ENCODE measurements at regions of chr13 and their contacts with region 1.

Region 1: DNA sequence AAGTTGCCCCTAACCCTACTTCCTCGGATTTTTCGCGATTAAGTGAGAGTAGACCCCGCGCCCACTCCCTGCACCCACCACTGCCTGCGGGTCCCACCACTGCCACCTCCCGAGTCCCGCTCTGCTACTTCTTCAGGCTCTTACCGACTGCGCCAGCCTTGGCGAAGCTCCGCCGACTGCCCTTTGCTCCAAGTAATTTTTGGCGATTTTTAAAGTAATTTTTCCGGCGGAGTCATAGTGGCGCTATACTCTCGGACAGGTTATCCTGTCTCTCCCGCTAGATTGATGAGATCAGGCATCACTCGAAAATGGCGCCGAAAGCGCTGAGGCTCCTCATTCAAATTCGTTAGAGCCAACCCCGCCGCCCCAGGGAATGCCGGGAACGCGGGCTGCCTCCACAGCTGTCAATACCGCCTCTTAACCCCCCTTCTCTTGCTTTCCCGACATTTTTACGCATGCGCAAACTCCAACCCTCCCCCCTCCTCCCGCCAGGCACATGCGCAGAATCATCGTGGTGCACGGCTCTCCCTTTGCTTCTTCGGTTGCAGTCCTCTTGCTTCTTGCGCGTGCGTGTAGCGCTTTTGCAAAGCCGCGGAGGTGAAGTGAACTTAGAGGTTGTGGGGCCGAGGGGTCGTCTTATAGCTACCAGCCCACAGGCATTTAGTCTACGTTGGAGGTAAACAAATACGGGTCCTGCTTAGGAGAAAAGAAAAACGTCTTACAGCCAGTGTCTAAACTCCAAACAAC is 66.6 kb downstream of the KCNRG start:
- DNase-seq: peak; percentile 100
- H3K4me3 ChIP-seq: peak overlapping the region; percentile 69 to 87 (median 80)
- H3K27ac ChIP-seq: peak overlapping the region; percentile 86 to 99 (median 92)
- H3K4me1 ChIP-seq: peaks cover 7 to 51% (median 45%) of the 10 kb centered on the region in 4 donors
- H3K27me3 ChIP-seq: no peaks in the 10 kb centered on the region
- CTCF ChIP-seq: peak in 2 of 3 experiments; percentile 8 to 16
- EP300 ChIP-seq: no peak
- POLR2A ChIP-seq: no peak

Region 2: DNA sequence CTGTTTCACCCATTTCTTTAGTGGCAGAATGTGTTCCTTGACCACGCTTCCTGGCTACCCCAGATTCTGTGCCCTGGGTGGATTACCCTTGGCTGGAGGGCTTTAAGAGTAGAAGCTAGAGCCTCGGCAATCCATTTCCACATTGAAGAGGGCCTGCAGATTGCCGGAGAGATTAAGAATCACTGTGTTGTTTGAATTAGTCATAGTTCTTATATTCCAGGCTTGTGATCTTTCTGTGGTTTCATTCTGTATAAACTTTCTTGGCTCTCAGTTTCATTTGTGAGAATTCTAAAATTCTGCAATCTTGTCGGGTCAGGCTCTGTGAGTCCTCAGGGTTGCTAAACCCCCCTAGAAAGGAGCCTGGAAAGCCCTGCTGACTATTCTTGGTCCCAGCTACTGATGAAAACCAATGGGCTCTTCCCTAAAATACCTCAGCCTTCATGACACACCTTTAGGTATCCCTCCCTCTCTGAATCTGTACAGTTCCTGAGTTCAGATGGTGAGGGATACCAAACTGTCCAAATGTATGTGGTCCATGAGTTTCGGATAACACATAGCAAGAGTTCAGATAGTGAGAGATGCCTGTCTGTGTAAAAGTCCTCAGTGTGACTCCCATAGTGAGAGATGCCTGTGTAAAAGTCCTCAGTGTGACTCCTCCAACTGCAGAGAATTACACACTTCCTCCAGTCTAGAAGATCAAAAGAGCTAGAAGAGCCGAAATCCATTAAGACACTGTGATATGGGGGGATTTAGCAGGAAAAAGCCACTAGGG is 581.8 kb before region 1 on chr13:
- intact Hi-C with region 1: no loop called
- DNase-seq: no peak
- H3K4me3 ChIP-seq: no peak overlapping the region
- H3K27ac ChIP-seq: peak overlapping the region in 1 of 4 donors; percentile 8
- H3K4me1 ChIP-seq: peaks cover 0 to 25% (median 16%) of the 10 kb centered on the region in 4 donors
- H3K27me3 ChIP-seq: no peaks in the 10 kb centered on the region
- CTCF ChIP-seq: no peak
- EP300 ChIP-seq: no peak
- POLR2A ChIP-seq: no peak

Region 3: DNA sequence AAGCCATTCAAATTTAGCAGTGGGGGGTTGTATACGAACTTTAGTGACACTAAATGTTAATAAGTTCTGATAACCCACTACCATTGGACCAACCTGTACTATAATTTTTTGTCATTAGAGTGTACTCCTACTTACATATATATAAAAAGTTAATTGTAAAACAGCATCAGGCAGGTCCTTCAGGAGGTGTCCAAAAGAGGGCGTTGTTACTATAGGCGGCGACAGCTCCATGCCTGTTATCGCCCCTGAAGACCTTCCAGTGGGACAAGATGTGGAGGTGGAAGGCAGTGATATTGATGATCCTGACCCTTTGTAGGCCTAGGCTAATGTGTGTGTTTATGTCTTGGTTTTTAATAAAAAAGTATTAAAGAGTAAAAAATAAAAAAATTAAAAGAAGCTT is 173.2 kb before region 1 on chr13:
- intact Hi-C with region 1: no loop called
- DNase-seq: no peak
- H3K4me3 ChIP-seq: no peak overlapping the region
- H3K27ac ChIP-seq: no peak overlapping the region
- H3K4me1 ChIP-seq: no peaks in the 10 kb centered on the region
- H3K27me3 ChIP-seq: no peaks in the 10 kb centered on the region
- CTCF ChIP-seq: no peak
- EP300 ChIP-seq: no peak
- POLR2A ChIP-seq: no peak

Region 4: DNA sequence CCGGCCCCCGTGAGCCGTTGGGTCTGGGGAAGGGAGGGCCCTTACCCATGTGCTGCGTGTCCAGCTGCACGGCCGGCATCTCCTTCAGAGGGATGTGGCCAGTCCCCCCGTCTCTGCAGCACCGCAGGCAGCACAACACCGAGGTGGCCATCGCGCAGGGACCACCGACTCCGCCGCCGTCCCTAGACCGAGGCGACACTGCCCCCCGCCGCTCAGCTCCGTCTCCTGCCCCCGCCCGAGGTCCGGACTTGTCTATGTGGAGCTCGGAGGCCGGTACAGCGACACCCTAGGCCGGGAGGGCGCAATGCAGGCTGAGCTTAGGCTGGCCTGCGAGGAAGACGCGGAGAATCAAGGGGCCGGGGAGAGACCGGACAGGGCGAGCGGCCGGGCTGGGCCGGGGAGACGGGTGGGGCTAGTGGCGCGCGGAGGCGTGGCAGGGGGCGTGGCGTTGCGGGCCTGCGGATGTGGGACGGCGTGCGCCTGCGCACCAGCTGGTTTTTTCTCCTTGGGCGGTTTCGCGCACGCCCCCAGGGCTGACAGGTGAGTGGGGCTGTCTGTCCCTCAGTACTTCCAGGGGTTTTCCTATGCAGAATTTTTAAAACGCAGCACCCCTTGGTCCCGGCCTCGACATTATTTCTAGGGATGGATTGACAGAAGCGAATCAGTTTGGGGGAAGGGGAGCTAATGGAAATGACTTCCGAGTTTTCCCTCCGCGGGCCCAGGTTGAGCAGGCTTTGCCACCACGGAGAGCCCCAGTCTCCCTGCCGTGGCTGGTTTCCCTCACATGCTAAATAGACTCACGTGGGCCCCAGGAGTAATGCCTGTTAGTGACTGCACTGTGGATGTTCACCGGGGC is 145.5 kb before region 1 on chr13 and contains the start of gene SPRYD7:
- intact Hi-C with region 1: loop called (anchors 5 kb)
- DNase-seq: peak; percentile 99
- H3K4me3 ChIP-seq: peak within 1 kb of the TSS; percentile 90 to 97 (median 94)
- H3K27ac ChIP-seq: peak within 1 kb of the TSS; percentile 90 to 94 (median 92)
- H3K4me1 ChIP-seq: peaks cover 21 to 76% (median 71%) of the 10 kb centered on the region in 4 donors
- H3K27me3 ChIP-seq: no peaks in the 10 kb centered on the region
- CTCF ChIP-seq: peak; percentile 89 to 98 (median 95)
- EP300 ChIP-seq: no peak
- POLR2A ChIP-seq: peak; percentile 65
- total RNA-seq, gene SPRYD7: 10.9 to 18.8 (median 15.0) TPM

Region 5: DNA sequence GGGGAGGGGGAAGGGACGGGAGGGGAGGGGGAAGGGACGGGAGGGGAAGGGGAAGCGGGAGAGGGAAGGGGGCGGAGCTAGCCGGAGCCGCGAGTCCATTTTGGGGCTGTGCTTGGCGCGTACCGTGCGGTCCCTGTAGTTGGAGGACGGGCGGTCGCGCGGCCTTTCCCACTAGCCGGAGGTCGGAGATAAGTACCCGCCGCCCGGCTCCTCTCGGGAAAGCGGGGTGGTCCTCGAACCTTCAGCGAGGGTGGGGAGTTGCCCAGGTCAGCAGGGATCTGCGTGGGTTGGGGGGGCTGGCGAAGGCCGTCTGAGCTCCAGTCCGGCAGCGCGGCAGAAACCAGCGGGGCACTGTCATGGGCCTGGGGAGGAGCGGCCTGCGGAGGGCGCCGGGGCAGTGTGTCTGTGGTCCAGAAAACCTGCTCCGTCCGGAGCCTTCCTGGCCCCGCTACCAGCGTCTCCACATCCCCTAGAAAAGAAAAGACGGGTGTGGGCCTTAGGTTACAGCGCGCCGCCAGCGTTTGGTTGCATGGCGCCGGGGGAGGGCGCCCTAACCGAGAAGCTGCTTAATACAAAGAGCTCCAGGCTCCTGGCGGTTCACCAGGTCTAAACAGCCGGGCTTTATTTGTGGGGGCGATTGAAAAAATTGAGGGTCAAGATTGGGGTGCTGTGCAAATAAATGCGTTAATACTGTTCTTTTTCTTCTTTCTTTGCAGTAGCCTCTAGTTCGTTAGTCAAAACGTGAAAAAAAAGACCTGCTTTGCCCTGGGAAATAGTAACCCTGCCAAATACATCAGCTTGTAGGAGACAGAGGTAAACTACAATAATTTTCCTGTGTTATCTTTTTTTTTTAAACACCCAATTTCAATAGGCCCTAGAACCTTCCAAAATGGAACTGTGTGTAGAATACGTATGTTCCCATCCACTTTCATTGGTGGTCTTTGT is 84.6 kb before region 1 on chr13 and contains the start of gene TRIM13:
- intact Hi-C with region 1: loop called (anchors 2 kb)
- DNase-seq: peak; percentile 97
- H3K4me3 ChIP-seq: peak within 1 kb of the TSS; percentile 86 to 96 (median 94)
- H3K27ac ChIP-seq: peak within 1 kb of the TSS; percentile 99
- H3K4me1 ChIP-seq: peaks cover 45 to 54% (median 52%) of the 10 kb centered on the region in 4 donors
- H3K27me3 ChIP-seq: no peaks in the 10 kb centered on the region
- CTCF ChIP-seq: peak; percentile 70 to 82 (median 72)
- EP300 ChIP-seq: no peak
- POLR2A ChIP-seq: peak; percentile 68
- total RNA-seq, gene TRIM13: 21.4 to 38.6 (median 34.8) TPM

Region 6: DNA sequence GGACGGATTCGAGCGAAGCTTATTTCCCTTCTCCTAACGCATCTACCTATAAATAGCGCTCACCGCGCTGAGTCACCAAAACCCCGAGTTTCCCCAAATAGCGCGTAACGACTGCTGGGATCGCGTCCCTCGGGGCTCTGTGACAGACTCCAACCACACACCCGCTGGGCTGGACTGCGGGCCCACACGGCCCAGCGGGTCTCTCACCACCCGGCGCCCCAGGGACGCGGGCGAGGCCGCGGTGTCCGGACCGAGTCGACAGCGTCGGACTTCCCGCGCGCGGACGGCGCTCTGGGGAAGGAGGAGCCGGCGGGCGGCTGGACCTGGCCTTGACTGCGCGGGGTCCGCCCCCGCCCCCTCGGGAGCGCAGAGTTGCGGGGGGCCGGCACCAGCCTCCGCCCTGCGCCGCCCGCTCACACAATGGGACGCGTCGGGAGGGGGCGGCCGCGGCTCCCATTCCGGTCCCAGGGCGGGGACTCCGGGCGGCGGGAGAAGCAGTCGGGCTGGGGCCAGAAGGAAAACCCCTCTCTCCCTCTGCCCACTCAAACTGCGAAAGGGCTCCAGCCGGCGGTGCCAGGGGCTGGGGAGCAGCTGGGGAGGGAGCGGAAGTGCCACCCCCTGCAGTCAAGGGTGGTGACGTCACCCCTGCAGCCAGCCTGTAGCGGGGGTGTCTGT is 42.1 kb after region 1 on chr13:
- intact Hi-C with region 1: loop called (anchors 2 kb)
- DNase-seq: peak; percentile 99
- H3K4me3 ChIP-seq: peak overlapping the region; percentile 79 to 99 (median 89)
- H3K27ac ChIP-seq: peak overlapping the region; percentile 95 to 100 (median 100)
- H3K4me1 ChIP-seq: peaks cover 17 to 65% (median 57%) of the 10 kb centered on the region in 4 donors
- H3K27me3 ChIP-seq: peaks cover 0 to 17% (median 6%) of the 10 kb centered on the region in 4 donors
- CTCF ChIP-seq: no peak
- EP300 ChIP-seq: no peak
- POLR2A ChIP-seq: peak; percentile 82

Region 7: GRCh38 chr13:50529154-50529882 is 447.5 kb after region 1 on chr13:
- intact Hi-C with region 1: loop called (anchors 5 kb)
- DNase-seq: no peak
- H3K4me3 ChIP-seq: peak overlapping the region; percentile 2 to 31 (median 22)
- H3K27ac ChIP-seq: peak overlapping the region; percentile 40 to 71 (median 66)
- H3K4me1 ChIP-seq: peaks cover 34 to 51% (median 41%) of the 10 kb centered on the region in 4 donors
- H3K27me3 ChIP-seq: no peaks in the 10 kb centered on the region
- CTCF ChIP-seq: no peak
- EP300 ChIP-seq: no peak
- POLR2A ChIP-seq: no peak

Region 8: DNA sequence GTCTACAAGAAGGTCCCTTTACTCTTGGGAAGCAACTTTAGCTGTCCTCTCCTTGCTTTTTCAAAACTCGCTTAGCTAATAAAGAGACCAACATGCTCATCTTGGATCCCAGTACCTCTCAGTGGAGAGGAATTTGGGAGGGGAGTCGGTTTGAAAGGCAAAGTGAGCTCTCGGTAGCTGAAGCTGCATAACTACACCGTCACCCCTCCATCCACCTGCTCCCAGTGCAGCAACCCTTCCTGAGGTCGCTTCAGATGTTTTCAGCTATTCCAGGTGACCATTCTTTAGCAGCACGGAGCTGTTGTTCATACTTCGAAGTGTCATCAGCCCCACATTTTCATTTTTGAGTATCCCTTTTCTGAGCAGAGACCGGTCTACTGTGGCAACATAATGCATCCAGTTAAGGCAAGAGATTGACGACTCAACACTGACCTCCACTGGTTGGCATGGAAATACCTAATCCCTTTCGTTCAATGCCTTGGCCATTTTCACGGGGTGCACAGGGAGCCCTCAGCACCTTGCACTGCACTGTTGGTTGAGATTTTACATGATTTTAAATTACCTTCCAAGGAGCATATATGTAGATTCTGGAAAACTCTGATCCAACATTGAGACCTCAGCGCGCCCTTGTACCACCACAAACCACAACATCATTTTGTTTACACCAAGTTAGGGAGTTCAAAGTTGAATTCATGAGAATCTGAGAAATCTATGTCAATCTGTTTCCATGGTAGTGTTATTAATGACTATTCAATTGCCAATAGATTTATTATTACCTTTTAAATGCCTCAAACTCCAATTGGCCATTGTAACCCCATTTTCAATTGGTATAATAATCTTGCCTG is 719.5 kb after region 1 on chr13:
- intact Hi-C with region 1: loop called (anchors 10 kb)
- DNase-seq: no peak
- H3K4me3 ChIP-seq: peak overlapping the region in 1 of 4 donors; percentile 22
- H3K27ac ChIP-seq: no peak overlapping the region
- H3K4me1 ChIP-seq: peaks cover 12 to 18% (median 15%) of the 10 kb centered on the region in 4 donors
- H3K27me3 ChIP-seq: no peaks in the 10 kb centered on the region
- CTCF ChIP-seq: peak; percentile 55 to 73 (median 61)
- EP300 ChIP-seq: no peak
- POLR2A ChIP-seq: no peak

Region 9: DNA sequence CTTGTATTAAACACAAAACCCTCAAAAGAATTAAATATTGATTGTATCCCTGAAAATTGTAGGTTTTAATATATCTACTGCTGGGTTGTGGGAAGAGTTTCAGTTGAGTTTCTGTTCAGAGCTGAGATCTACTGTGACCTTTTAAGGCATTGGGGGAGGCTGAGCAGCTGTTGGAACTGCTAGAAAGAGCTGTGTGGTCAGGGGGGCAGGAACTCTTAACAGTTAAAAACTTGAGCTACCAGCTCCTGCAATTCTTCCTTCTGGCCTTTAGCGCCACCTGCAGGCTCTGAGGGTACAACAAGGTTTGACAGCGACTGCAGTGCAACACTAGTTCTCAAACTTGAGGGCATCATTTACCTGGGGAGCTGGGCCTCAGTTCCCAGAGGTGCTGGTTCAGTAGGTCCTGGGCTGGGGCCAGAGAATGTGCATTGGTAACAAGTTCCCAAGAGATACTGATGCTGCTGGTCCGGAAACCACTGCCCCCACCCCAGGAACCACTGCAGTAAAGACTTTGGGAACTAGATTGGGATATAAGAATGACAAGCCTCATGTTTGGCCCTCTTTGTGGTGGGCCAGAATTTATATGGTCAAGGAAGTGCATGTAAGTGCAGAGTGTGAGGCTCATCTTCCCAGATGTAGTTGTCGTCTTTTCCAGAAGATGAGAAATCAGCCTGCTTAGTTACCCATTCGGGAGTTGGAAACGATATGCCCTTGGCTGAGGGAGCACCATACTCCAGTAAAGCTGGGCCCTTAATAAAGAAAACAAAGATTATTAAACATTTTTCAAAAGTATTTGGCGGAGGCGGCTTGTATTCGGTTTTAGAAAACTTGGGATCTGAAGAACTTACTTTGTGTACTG is 830.3 kb after region 1 on chr13:
- intact Hi-C with region 1: loop called (anchors 5 kb)
- DNase-seq: no peak
- H3K4me3 ChIP-seq: no peak overlapping the region
- H3K27ac ChIP-seq: peak overlapping the region; percentile 7 to 91 (median 66)
- H3K4me1 ChIP-seq: peaks cover 54 to 70% (median 62%) of the 10 kb centered on the region in 4 donors
- H3K27me3 ChIP-seq: no peaks in the 10 kb centered on the region
- CTCF ChIP-seq: peak; percentile 80 to 89 (median 89)
- EP300 ChIP-seq: no peak
- POLR2A ChIP-seq: no peak